ENCODE measurements at regions of chr12 and their contacts with region 1.

Region 1: DNA sequence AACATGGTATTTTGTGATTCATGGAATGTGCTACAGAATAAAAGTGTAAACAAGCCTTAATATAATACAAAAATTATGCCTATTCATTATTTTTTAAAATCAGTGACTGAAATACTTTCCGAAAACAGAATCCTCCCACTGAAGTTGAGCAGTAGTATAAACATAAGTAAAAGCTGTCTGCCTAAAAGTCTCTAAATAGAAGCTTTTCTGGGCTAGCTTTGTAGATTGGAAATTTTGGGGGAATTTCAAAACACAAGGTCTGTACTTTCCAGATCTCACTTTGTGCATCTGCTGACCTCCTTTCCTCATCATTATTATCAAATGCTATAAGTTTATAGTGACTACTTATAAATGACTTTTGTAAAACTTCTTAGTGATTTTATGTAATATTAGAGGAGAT is 80.4 kb upstream of the TRHDE start:
- DNase-seq: no peak
- CTCF ChIP-seq: no peak

Region 2: DNA sequence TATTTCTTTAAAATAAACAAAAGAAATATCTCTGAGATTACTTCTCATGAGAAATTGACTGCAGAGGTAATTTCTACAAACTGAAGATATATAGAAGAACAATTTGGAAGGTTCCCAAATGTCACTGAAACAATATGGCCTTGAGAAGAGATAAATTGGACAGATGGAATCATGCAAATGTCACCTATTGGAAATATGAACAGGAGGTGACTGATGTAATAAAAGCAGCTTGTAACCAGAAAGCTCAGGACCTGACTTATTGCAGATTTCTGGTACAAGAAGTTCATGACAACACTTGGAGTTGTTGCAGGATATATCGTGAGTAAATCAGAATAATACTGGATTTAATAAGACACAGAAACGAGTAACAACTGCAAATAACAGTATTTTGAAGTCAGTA is 12.9 kb before region 1 on chr12:
- CTCF ChIA-PET with region 1: interaction called, 10 read pairs
- POLR2A ChIA-PET with region 1: no interaction called
- DNase-seq: no peak
- CTCF ChIP-seq: no peak